HEK293 (cell line): ENCODE measurements at regions of chr15 and their contacts with region 1.

Region 1: DNA sequence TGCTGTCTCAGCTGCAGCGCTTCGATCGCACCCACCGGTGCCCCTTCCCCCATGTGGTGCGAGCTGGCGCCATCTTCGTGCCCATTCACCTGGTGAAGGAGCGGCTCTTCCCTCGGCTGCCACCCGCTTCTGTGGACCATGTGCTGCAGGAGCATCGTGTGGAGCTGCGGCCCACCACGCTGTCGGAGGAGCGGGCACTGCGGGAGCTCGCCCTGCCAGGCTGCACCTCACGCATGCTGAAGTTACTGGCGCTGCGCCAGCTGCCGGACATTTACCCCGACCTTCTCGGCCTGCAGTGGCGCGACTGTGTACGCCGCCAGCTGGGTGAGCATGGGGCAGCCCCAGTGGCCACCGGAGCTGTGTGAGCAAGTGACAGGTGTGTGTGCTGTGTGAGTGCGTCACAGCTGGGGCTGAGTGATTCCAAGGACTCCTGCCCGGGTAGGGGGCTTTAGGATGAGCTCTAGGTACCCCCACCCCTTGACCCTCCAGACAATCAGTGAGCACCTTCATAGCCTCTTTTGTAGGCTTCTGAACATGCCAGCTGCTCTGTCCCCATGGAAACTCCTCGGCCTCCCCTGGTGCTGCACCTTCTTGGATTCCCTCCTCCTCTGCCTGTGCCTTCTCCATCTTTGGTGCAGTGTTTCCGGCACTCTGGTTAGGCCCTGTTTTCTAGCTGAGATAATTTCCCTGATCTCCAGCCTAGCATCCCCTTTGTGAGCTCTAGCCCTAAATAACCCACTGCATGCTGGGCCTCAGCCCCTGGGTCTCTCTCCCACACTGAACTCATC is 7.0 kb downstream of the C15orf39 start:
- H3K4me3 ChIP-seq: no peak overlapping the region
- H3K27ac ChIP-seq: no peak overlapping the region
- H3K4me1 ChIP-seq: peaks cover 13% of the 10 kb centered on the region
- CTCF ChIP-seq: no peak

Region 2: GRCh38 chr15:75153565-75154276 is 55.0 kb before region 1 on chr15:
- CTCF ChIA-PET with region 1: no interaction called
- POLR2A ChIA-PET with region 1: no interaction called
- H3K4me3 ChIP-seq: no peak overlapping the region
- H3K27ac ChIP-seq: no peak overlapping the region
- H3K4me1 ChIP-seq: 0 out of 2 replicates have a peak, but pooled peaks cover 4% of the 10 kb centered on the region
- CTCF ChIP-seq: no peak

Region 3: DNA sequence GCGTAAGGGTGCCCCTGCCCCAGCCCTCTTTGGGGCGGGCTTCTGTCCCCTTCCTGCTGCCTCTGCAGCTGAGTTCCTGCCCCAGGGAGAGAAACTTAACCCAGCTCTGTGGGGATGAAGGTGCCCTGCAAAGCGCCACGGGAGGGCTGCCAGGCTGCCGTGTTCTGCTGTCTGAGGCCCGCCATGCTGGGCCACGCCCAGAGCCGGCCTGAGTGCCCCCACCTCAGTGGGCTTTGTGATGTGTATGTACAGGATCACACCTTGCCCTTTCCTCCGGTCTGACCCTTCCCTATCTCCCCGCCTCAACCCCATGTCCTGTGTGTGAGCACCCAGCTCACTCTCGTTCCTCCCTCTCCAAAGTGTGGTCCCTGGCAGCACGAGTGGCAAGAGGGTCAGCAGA is 15.6 kb after region 1 on chr15:
- CTCF ChIA-PET with region 1: no interaction called
- POLR2A ChIA-PET with region 1: no interaction called
- H3K4me3 ChIP-seq: no peak overlapping the region
- H3K27ac ChIP-seq: no peak overlapping the region
- H3K4me1 ChIP-seq: no peaks in the 10 kb centered on the region
- CTCF ChIP-seq: no peak

Region 4: DNA sequence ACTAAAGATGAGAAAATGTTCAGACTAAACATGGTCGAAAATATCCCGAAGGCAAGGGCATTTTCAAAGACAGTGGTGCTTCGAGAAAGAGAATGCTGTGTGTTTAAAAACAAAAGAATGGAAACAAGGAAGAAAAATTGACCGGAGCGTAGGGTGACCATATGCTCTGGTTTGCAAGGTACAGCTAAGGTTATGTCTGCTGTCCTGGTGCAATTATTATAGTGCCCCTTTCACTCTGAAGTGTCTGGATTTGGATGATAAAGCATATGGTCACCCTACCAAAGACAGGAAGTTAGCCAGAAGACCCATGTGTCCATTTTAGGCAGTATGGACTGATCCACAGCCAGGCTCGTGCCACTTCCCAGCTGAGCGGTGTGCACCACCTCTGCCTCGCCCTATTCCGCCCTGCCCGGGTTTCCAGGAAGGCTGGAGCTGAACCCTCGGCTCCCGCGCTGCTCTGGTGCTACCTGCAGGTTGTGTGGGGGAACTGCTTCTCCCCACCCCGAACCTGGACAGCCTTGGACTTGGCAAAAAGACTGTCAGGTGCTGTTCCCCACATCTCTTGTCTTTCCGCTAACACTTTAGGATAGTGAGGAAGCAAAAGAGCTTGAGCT is 99.2 kb after region 1 on chr15:
- CTCF ChIA-PET with region 1: interaction called, 12 read pairs
- POLR2A ChIA-PET with region 1: no interaction called
- H3K4me3 ChIP-seq: no peak overlapping the region
- H3K27ac ChIP-seq: no peak overlapping the region
- H3K4me1 ChIP-seq: no peaks in the 10 kb centered on the region
- CTCF ChIP-seq: peak; percentile 89